ENCODE measurements at regions of chr9 and their contacts with region 1.

Region 1: DNA sequence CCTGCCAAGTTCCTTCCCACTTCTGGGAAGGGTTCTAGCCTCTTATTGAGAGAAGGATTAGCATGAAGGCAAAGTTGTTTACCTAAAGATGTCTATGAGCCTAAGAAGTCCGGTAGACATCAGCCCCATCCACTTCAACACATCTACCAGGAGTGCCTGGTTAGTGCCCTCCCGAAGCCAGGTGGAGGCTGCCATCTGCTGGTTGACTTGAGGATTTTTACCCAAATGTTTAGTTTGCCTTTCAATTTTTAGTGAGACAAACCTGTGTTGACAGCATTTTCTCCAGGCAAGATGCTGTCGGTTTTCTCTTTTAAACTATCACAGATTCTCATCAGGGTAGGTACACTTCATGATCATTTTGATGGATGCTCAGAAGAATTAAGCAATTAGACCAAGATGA is 83.6 kb upstream of the TNFSF8 start:
- DNase-seq: no peak
- ATAC-seq: peak; percentile 85
- H3K4me3 ChIP-seq: no peak overlapping the region
- H3K27ac ChIP-seq: no peak overlapping the region
- H3K4me1 ChIP-seq: no peaks in the 10 kb centered on the region
- H3K27me3 ChIP-seq: no peaks in the 10 kb centered on the region
- CTCF ChIP-seq: peak; percentile 72

Region 2: DNA sequence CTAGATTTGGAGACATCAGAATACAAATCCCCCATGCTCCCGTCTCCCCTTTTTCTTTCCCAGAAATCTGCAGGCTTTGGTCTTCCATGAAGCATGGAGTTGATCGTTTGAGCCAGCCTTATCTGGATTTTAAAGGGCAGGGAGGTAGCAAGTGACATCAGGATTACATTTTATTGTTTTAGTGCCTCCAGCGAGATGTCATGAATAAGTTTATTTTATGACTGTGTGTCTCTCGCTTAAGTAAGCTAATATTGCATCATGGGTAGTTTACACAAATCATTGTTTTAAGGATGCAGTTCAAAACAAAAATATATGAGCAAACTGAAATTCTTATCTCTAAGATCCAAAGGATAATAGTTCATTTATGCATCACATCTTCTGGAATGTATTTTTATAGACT is 32.9 kb before region 1 on chr9:
- CTCF ChIA-PET with region 1: no interaction called
- POLR2A ChIA-PET with region 1: no interaction called
- in situ Hi-C with region 1: no loop called
- intact Hi-C with region 1: no loop called
- DNase-seq: no peak
- ATAC-seq: no peak
- H3K4me3 ChIP-seq: no peak overlapping the region
- H3K27ac ChIP-seq: no peak overlapping the region
- H3K4me1 ChIP-seq: no peaks in the 10 kb centered on the region
- H3K27me3 ChIP-seq: no peaks in the 10 kb centered on the region
- CTCF ChIP-seq: no peak

Region 3: DNA sequence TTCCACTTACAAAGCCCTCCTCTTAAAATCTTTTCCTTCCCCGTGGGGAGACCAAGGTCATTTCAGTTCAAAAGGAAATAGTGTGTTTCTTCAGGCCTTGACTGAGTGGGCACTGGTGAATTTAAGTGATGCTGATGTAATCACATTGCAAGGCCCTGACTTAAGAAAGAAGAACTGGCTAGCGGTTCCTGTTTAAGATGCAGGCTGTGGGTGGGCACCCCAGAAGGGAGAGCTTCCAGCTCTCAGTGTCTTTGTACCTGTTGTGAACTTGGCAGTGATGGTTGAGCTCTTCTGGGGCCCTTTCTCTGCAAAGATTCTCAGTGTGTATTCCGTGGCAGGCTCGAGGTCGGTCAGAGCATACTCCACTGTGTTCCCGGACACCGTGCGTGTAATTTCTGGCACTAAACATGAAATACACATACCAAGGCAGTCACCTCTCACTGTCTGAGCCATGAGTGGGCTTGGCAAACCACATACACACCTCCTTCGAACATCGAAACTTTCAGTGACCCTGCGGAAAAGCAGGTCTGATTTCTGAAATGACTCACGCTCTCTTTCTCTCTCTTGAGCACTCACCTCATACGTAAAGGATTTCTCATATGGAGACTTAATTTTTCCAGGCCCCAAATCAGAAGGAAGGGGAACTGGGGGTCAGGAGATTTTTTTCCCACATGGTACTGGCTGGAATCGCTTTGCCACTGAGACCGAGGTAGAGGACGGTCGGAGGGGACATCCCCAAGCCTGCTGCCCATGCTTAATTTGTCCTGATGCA is 22.0 kb after region 1 on chr9:
- CTCF ChIA-PET with region 1: no interaction called
- POLR2A ChIA-PET with region 1: no interaction called
- in situ Hi-C with region 1: no loop called
- intact Hi-C with region 1: no loop called
- DNase-seq: no peak
- ATAC-seq: no peak
- H3K4me3 ChIP-seq: no peak overlapping the region
- H3K27ac ChIP-seq: no peak overlapping the region
- H3K4me1 ChIP-seq: no peaks in the 10 kb centered on the region
- H3K27me3 ChIP-seq: no peaks in the 10 kb centered on the region
- CTCF ChIP-seq: no peak

Region 4: GRCh38 chr9:115524453-115525059 is 510.6 kb after region 1 on chr9:
- CTCF ChIA-PET with region 1: no interaction called
- POLR2A ChIA-PET with region 1: no interaction called
- in situ Hi-C with region 1: no loop called
- intact Hi-C with region 1: loop called (anchors 5 kb)
- DNase-seq: peak; percentile 12
- ATAC-seq: no peak
- H3K4me3 ChIP-seq: no peak overlapping the region
- H3K27ac ChIP-seq: no peak overlapping the region
- H3K4me1 ChIP-seq: no peaks in the 10 kb centered on the region
- H3K27me3 ChIP-seq: no peaks in the 10 kb centered on the region
- CTCF ChIP-seq: peak; percentile 54

Measured in Panc1 (cell line).